Transverse colon (tissue), 4 donors: ENCODE measurements at regions of chr17 and their contacts with region 1.

Region 1: GRCh38 chr17:16521070-16521727 is 29.2 kb upstream of the LRRC75A start:
- DNase-seq: peak; percentile 81
- H3K4me3 ChIP-seq: no peak overlapping the region
- H3K27ac ChIP-seq: peak overlapping the region in 3 of 4 donors; percentile 23 to 47 (median 29)
- H3K4me1 ChIP-seq: peaks cover 0 to 6% (median 6%) of the 10 kb centered on the region in 4 donors
- H3K27me3 ChIP-seq: no peaks in the 10 kb centered on the region
- CTCF ChIP-seq: peak; percentile 82 to 96 (median 88)
- EP300 ChIP-seq: no peak
- POLR2A ChIP-seq: peak; percentile 30

Region 2: DNA sequence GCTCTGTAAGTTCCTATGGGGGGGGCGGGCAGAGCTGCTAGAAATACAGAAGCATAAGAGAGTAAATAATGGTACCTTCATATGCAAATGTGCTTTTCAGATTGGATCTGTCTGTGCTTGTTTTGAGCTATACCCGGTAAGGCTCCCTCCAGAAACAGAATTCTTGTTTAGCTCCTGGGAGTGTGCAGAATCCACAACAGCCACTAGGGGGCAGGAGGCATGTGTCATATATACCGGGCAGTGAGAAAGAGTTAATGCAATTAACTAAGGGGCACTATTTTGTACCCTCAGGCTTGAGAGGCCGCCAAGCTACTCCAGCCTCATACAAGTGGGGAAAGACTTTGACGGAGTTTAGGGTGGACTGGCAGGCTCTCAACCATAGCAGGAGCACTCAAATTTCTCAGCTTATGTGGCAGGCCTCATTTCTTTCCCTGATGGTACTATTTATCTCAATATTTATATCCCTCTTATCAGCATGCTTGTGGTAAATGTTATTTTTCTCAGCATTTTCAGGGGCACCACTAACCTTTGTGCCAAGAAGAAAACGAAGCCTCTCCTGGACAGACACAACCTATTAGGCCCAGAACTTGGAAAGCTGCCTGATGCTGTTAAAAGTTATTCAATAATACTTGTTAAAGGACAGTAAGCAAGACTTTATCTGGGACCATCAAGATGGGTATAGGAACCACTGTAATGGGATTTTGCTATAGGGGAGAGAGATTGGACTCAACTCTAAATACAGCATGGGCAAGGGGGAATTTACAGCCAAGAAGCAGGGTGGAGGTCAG is 157.3 kb before region 1 on chr17:
- in situ Hi-C with region 1: loop called (anchors 10 to 25 kb)
- intact Hi-C with region 1: no loop called
- DNase-seq: peak; percentile 80
- H3K4me3 ChIP-seq: no peak overlapping the region
- H3K27ac ChIP-seq: no peak overlapping the region
- H3K4me1 ChIP-seq: peaks cover 0 to 6% (median 2%) of the 10 kb centered on the region in 4 donors
- H3K27me3 ChIP-seq: no peaks in the 10 kb centered on the region
- CTCF ChIP-seq: peak; percentile 88 to 97 (median 92)
- EP300 ChIP-seq: no peak
- POLR2A ChIP-seq: no peak

Region 3: GRCh38 chr17:16398270-16399267 is 122.6 kb before region 1 on chr17:
- in situ Hi-C with region 1: no loop called
- intact Hi-C with region 1: no loop called
- DNase-seq: no peak
- H3K4me3 ChIP-seq: no peak overlapping the region
- H3K27ac ChIP-seq: no peak overlapping the region
- H3K4me1 ChIP-seq: no peaks in the 10 kb centered on the region
- H3K27me3 ChIP-seq: no peaks in the 10 kb centered on the region
- CTCF ChIP-seq: no peak
- EP300 ChIP-seq: no peak
- POLR2A ChIP-seq: no peak

Region 4: GRCh38 chr17:16456742-16457316 is 64.4 kb before region 1 on chr17:
- in situ Hi-C with region 1: loop called in 3 of 4 experiments (anchors 5 to 10 kb)
- intact Hi-C with region 1: loop called (anchors 5 kb)
- DNase-seq: no peak
- H3K4me3 ChIP-seq: no peak overlapping the region
- H3K27ac ChIP-seq: no peak overlapping the region
- H3K4me1 ChIP-seq: peaks cover 0 to 8% (median 0%) of the 10 kb centered on the region in 4 donors
- H3K27me3 ChIP-seq: no peaks in the 10 kb centered on the region
- CTCF ChIP-seq: no peak
- EP300 ChIP-seq: no peak
- POLR2A ChIP-seq: no peak

Region 5: DNA sequence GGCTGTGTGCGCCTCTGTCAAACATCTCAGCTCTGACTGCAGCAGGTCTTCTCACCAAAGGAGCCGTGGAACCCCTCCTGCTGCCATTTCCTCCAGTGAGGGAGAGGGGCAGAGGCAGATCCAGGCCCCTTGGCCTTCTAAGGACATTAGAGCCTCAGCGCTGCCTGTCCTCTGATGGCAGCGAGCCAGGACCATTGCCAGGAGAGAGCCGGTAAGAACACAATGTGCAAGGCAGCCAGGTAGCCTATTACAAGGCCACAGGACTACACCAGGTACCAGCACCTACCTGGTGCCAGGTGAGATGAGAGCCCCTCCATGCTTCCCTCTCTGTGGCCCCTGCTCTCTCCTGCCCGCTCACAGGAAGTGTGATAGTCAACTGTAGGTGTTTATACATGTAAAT is 40.2 kb before region 1 on chr17:
- in situ Hi-C with region 1: no loop called
- intact Hi-C with region 1: loop called (anchors 1 kb)
- DNase-seq: no peak
- H3K4me3 ChIP-seq: no peak overlapping the region
- H3K27ac ChIP-seq: no peak overlapping the region
- H3K4me1 ChIP-seq: peaks cover 21 to 44% (median 27%) of the 10 kb centered on the region in 4 donors
- H3K27me3 ChIP-seq: no peaks in the 10 kb centered on the region
- CTCF ChIP-seq: no peak
- EP300 ChIP-seq: no peak
- POLR2A ChIP-seq: no peak

Region 6: GRCh38 chr17:16877102-16877501 is 355.9 kb after region 1 on chr17:
- in situ Hi-C with region 1: no loop called
- intact Hi-C with region 1: no loop called
- DNase-seq: no peak
- H3K4me3 ChIP-seq: no peak overlapping the region
- H3K27ac ChIP-seq: no peak overlapping the region
- H3K4me1 ChIP-seq: peaks cover 0 to 9% (median 3%) of the 10 kb centered on the region in 4 donors
- H3K27me3 ChIP-seq: no peaks in the 10 kb centered on the region
- CTCF ChIP-seq: no peak
- EP300 ChIP-seq: no peak
- POLR2A ChIP-seq: no peak